GM10248 (cell line): ENCODE measurements at regions of chr16 and their contacts with region 1.

Region 1: GRCh38 chr16:69112285-69113129 is 7.1 kb downstream of the HAS3 start:
- DNase-seq: peak; percentile 79
- CTCF ChIP-seq: peak; percentile 82

Region 2: GRCh38 chr16:68866933-68867332 is 245.6 kb before region 1 on chr16:
- CTCF ChIA-PET with region 1: no interaction called
- POLR2A ChIA-PET with region 1: no interaction called
- DNase-seq: peak; percentile 25
- CTCF ChIP-seq: no peak

Region 3: GRCh38 chr16:69073161-69073669 is 39.3 kb before region 1 on chr16:
- CTCF ChIA-PET with region 1: interaction called, 15 read pairs
- POLR2A ChIA-PET with region 1: no interaction called
- DNase-seq: no peak
- CTCF ChIP-seq: no peak

Region 4: GRCh38 chr16:69089091-69089910 is 23.2 kb before region 1 on chr16:
- CTCF ChIA-PET with region 1: interaction called, 16 read pairs
- POLR2A ChIA-PET with region 1: no interaction called
- DNase-seq: no peak
- CTCF ChIP-seq: no peak

Region 5: GRCh38 chr16:69100071-69100691 is 12.3 kb before region 1 on chr16:
- CTCF ChIA-PET with region 1: interaction called, 10 read pairs
- POLR2A ChIA-PET with region 1: no interaction called
- DNase-seq: no peak
- CTCF ChIP-seq: no peak

Region 6: GRCh38 chr16:69123910-69124309 is 11.4 kb after region 1 on chr16:
- CTCF ChIA-PET with region 1: interaction called, 60 read pairs
- POLR2A ChIA-PET with region 1: no interaction called
- DNase-seq: peak; percentile 68
- CTCF ChIP-seq: peak; percentile 67

Region 7: GRCh38 chr16:69132424-69133252 is 20.1 kb after region 1 on chr16 and contains the starts of genes CHTF8 and UTP4:
- CTCF ChIA-PET with region 1: interaction called, 11 read pairs
- POLR2A ChIA-PET with region 1: interaction called, 3 read pairs
- DNase-seq: peak; percentile 92
- CTCF ChIP-seq: no peak

Region 8: GRCh38 chr16:69193855-69194254 is 81.3 kb after region 1 on chr16:
- CTCF ChIA-PET with region 1: no interaction called
- POLR2A ChIA-PET with region 1: no interaction called
- DNase-seq: no peak
- CTCF ChIP-seq: no peak

Region 9: GRCh38 chr16:69286941-69287713 is 174.6 kb after region 1 on chr16:
- CTCF ChIA-PET with region 1: interaction called, 18 read pairs
- POLR2A ChIA-PET with region 1: no interaction called
- DNase-seq: peak; percentile 56
- CTCF ChIP-seq: peak; percentile 46